Caco-2 (cell line): ENCODE measurements at regions of chr15 and their contacts with region 1.

Region 1: GRCh38 chr15:68252925-68253534 is 23.5 kb upstream of the CLN6 start:
- DNase-seq: peak in 1 of 2 experiments; percentile 63
- H3K4me3 ChIP-seq: no peak overlapping the region
- H3K4me3 Mint-ChIP-seq: no peak overlapping the region
- H3K27ac Mint-ChIP-seq: no peak overlapping the region
- H3K4me1 ChIP-seq: no peaks in the 10 kb centered on the region
- H3K4me1 Mint-ChIP-seq: no peaks in the 10 kb centered on the region
- H3K27me3 ChIP-seq: no peaks in the 10 kb centered on the region
- H3K27me3 Mint-ChIP-seq: peaks cover 3% of the 10 kb centered on the region
- CTCF ChIP-seq: peak; percentile 60 to 82

Region 2: DNA sequence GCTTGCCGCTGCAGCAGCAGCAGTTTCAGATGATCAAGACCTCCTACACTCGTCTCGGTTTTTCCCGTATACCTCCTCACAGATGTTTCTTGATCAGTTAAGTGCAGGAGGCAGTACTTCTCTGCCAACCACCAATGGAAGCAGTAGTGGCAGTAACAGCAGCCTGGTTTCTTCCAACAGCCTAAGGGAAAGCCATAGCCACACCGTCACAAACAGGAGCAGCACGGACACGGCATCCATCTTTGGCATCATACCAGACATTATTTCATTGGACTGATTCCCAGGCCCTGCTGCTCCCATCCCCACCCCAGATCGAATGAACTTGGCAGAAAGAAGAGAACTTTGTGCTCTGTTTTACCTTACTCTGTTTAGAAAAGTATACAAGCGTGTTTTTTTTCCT is 65.5 kb before region 1 on chr15:
- CTCF ChIA-PET with region 1: no interaction called
- POLR2A ChIA-PET with region 1: no interaction called
- intact Hi-C with region 1: no loop called
- DNase-seq: no peak
- H3K4me3 ChIP-seq: no peak overlapping the region
- H3K4me3 Mint-ChIP-seq: no peak overlapping the region
- H3K27ac Mint-ChIP-seq: no peak overlapping the region
- H3K4me1 ChIP-seq: no peaks in the 10 kb centered on the region
- H3K4me1 Mint-ChIP-seq: no peaks in the 10 kb centered on the region
- H3K27me3 ChIP-seq: no peaks in the 10 kb centered on the region
- H3K27me3 Mint-ChIP-seq: no peaks in the 10 kb centered on the region
- CTCF ChIP-seq: no peak

Region 3: DNA sequence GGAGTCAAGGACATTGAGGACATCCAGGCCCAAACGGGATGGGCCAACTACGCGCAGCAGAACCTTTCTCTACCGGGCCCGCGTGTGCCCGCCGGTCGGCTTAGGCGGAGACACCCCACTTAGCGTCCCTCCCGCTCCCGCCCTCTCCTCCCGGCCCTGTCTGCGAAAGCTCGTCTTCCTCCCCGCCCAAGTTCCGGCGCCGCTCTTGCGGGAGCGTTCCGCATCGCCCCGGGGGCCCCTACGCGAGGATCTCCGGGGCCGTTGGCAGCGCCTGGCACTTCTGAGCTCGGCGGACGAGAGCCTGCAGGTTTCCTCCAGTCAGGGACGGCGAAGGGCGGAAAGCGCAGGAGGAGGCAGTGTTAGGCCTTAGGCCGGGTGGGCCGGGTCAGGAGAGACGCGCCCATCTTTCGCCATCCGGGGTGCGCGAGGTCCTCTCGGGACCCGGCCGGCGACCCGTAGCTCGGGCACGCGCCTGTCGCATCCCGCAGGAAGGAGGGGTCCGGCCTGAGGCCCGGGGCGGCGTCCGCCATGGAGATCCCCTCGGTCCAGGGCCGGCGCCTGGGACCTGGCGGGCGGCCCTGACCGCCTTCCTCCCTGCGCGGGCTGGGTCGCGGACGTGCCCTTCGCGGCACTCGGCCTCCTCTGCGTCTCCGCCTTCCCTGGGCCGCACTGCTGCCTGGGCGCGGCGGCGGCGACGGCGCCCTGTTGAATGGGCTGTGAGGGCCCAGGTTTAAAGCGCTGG is 24.7 kb after region 1 on chr15 and contains the start of gene FEM1B:
- CTCF ChIA-PET with region 1: interaction called, 21 read pairs
- POLR2A ChIA-PET with region 1: no interaction called
- intact Hi-C with region 1: loop called (anchors 1 kb)
- DNase-seq: peak; percentile 90 to 91
- H3K4me3 ChIP-seq: peak within 1 kb of the TSS; percentile 61
- H3K4me3 Mint-ChIP-seq: peak within 1 kb of the TSS; percentile 95
- H3K27ac Mint-ChIP-seq: peak within 1 kb of the TSS; percentile 93
- H3K4me1 ChIP-seq: peaks cover 45% of the 10 kb centered on the region
- H3K4me1 Mint-ChIP-seq: peaks cover 50% of the 10 kb centered on the region
- H3K27me3 ChIP-seq: no peaks in the 10 kb centered on the region
- H3K27me3 Mint-ChIP-seq: no peaks in the 10 kb centered on the region
- CTCF ChIP-seq: no peak
- total RNA-seq, gene FEM1B: 33.5 and 41.0 TPM in 2 replicates

Region 4: DNA sequence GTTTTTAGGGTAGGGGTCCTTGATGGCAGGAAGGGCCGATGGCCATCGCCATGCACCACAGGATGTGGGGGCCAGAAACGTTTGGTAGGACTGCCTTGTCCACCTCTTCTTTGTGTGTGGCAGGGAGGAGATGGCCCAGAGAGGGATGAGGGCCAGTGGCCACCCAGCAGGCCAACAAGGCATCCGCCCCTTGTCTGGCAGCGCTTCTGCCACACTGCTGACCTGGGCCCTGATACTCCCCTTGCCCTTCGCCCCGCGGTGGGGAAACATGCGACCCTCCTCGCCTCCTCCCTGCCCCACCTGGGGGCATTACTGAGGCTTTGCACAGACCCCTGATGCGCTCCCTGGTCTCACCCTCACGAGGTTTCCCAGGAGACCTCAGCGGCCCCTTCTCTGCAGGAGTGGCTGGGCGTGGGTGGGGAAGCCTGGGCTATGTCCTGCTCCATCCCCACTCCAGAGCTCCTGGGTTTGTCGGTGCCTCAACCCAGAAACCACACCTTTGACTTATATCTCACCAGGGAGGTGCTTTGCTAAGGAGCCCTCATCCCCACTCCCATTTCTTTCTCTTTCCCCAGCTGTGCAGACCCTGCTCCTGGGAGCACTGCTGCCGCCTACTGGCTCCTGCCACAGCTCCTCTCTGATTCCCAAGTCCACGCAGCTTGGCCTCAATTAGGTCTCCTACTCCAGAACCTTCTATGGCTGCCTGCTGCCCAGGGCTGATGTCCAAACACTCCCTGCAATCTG is 63.2 kb after region 1 on chr15:
- CTCF ChIA-PET with region 1: interaction called, 23 read pairs
- POLR2A ChIA-PET with region 1: no interaction called
- intact Hi-C with region 1: no loop called
- DNase-seq: peak; percentile 47 to 50
- H3K4me3 ChIP-seq: no peak overlapping the region
- H3K4me3 Mint-ChIP-seq: no peak overlapping the region
- H3K27ac Mint-ChIP-seq: no peak overlapping the region
- H3K4me1 ChIP-seq: no peaks in the 10 kb centered on the region
- H3K4me1 Mint-ChIP-seq: no peaks in the 10 kb centered on the region
- H3K27me3 ChIP-seq: no peaks in the 10 kb centered on the region
- H3K27me3 Mint-ChIP-seq: no peaks in the 10 kb centered on the region
- CTCF ChIP-seq: peak; percentile 39 to 49

Region 5: DNA sequence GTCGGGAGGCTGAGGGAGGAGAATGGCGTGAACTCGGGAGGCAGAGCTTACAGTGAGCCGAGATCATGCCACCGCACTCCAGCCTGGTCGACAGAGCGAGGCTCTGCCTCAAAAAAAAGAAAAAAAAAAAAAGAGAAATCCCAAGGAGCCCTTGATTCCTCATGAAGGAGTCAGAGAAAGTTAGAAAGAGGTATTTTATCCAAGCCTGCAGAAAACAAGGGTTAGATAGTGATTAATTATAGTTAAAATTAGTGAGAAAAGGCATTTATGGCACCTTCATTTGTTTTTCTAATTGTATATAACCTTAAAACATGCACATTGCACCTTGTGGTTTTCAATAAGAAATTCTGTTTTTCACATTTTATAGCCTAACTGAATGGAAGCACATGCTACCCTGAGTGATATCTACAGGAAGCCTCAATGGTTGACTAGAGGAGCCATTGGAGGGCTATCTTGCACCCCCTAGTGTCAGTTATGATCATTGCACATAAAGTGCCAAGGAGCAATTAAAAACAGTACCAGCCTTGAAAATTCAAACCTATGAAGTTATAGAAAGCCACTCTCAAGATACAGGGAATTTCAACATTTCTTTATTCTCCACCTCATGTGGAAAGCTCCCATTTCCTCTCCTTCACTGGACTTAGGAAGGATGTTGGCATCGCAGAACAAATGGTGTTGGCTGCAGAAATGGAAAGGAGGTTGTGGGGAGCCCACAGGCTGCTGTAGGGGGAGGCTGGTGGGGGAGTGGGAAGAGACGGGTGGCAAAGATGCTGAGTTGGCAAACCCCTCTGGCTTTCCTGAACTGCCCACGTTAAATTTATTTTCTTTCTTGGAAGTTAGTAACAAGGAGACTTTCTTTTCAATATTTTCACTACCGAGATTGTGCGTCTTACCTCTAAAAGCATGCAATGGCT is 130.4 kb after region 1 on chr15:
- CTCF ChIA-PET with region 1: interaction called, 5 read pairs
- POLR2A ChIA-PET with region 1: no interaction called
- intact Hi-C with region 1: loop called (anchors 5 kb)
- DNase-seq: peak in 1 of 2 experiments; percentile 57
- H3K4me3 ChIP-seq: no peak overlapping the region
- H3K4me3 Mint-ChIP-seq: no peak overlapping the region
- H3K27ac Mint-ChIP-seq: no peak overlapping the region
- H3K4me1 ChIP-seq: no peaks in the 10 kb centered on the region
- H3K4me1 Mint-ChIP-seq: peaks cover 6% of the 10 kb centered on the region
- H3K27me3 ChIP-seq: no peaks in the 10 kb centered on the region
- H3K27me3 Mint-ChIP-seq: peaks cover 2% of the 10 kb centered on the region
- CTCF ChIP-seq: peak; percentile 40 to 56

Region 6: GRCh38 chr15:68538291-68538690 is 285.3 kb after region 1 on chr15:
- CTCF ChIA-PET with region 1: interaction called, 16 read pairs
- POLR2A ChIA-PET with region 1: no interaction called
- intact Hi-C with region 1: loop called (anchors 2 kb)
- DNase-seq: no peak
- H3K4me3 ChIP-seq: no peak overlapping the region
- H3K4me3 Mint-ChIP-seq: no peak overlapping the region
- H3K27ac Mint-ChIP-seq: no peak overlapping the region
- H3K4me1 ChIP-seq: no peaks in the 10 kb centered on the region
- H3K4me1 Mint-ChIP-seq: peaks cover 1% of the 10 kb centered on the region
- H3K27me3 ChIP-seq: no peaks in the 10 kb centered on the region
- H3K27me3 Mint-ChIP-seq: peaks cover 3% of the 10 kb centered on the region
- CTCF ChIP-seq: no peak